ENCODE measurements at regions of chr11 and their contacts with region 1.

Region 1: DNA sequence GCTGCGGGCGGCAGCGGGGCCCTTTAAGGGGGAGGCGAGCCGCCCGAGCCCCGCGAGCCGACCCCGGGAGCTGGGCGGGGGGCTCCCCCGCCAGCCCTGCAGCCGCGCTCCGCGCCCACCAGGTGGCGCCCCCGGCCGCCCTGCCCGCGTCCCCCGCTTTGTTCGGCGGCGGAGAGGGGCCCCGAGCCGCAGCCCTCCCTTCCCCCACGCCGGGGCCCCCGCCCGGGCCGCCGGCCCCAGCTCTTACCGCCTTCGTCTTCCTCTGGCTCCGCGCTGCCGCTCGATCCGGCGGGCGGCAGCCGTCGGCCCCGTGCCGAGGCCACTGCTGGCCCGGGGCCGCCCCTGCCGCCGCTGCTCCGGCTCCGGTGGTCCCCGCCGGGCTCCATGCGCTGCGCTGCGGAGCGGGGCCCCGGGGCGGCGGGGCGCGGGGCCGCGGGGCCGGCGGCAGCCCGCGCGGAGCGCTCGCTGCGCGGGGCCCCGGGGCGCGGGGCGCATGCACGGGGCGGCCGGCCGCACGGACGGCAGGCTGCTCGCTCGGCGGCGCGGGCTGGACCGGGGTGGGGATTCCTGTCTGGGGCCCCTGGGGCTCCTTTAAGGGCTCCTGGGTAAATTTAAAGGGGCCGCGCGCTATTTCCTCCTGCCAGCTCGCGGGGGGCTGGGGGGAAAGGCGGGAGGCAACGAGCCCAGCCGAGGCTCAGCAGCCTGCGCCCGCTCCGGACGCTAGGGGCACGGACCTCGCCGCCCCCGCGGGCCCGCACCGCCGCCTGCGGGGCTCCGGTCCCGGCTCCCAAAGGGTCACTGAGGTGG is at the start of gene ZFTA:
- DNase-seq: peak; percentile 33 to 81 (median 64)
- ATAC-seq: peak; percentile 76
- H3K4me3 ChIP-seq: peak within 1 kb of the TSS; percentile 69 to 85
- H3K4me3 Mint-ChIP-seq: peak within 1 kb of the TSS; percentile 94
- H3K27ac ChIP-seq: peak within 1 kb of the TSS in 1 of 2 experiments; percentile 13
- H3K27ac Mint-ChIP-seq: peak within 1 kb of the TSS; percentile 86
- H3K4me1 ChIP-seq: peaks cover 15% of the 10 kb centered on the region
- H3K4me1 Mint-ChIP-seq: peaks cover 16% of the 10 kb centered on the region
- H3K27me3 ChIP-seq: peaks cover 0 to 3% of the 10 kb centered on the region in 2 experiments
- H3K27me3 Mint-ChIP-seq: no peaks in the 10 kb centered on the region
- CTCF ChIP-seq: peak; percentile 52
- total RNA-seq, gene ZFTA: 3.2 to 5.7 TPM

Region 2: GRCh38 chr11:63671322-63672155 is 96.9 kb before region 1 on chr11 and contains the start of gene ATL3:
- CTCF ChIA-PET with region 1: interaction called, 4 read pairs
- POLR2A ChIA-PET with region 1: no interaction called
- intact Hi-C with region 1: loop called in 1 of 2 experiments (anchors 2 kb)
- DNase-seq: peak; percentile 87 to 98 (median 96)
- ATAC-seq: peak; percentile 95
- H3K4me3 ChIP-seq: peak within 1 kb of the TSS; percentile 79 to 91
- H3K4me3 Mint-ChIP-seq: peak within 1 kb of the TSS; percentile 86
- H3K27ac ChIP-seq: peak within 1 kb of the TSS; percentile 65 to 74
- H3K27ac Mint-ChIP-seq: peak within 1 kb of the TSS; percentile 87
- H3K4me1 ChIP-seq: peaks cover 19% of the 10 kb centered on the region
- H3K4me1 Mint-ChIP-seq: peaks cover 29% of the 10 kb centered on the region
- H3K27me3 ChIP-seq: no peaks in the 10 kb centered on the region
- H3K27me3 Mint-ChIP-seq: no peaks in the 10 kb centered on the region
- CTCF ChIP-seq: no peak
- total RNA-seq, gene ATL3: 11.6 to 11.8 TPM

Region 3: DNA sequence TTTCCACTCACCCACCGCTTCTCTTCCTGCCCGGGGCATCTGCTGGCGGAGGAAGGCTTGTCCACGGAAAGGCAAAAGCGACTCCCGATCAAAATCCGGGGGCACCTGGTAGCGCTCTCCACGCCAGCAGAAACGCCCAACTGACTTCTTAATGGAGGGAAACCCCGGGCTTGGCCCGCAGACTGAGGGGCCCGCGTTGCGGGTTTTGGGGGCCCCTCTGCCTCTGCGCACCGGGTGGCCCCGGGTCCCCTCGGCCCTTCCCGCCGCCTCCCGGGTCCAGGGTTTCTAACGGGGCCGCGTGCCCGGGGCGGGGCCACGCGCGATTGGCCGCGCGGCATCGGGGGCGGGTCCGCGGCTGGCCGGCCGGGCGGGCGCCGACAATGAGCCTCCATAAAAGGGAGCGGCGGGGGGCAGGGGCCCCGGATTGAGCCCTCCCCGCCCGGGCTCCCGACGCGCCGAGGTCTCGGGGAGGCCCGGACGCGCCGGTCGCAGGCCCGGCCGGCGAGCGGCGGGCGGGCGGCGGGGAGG is 44.7 kb after region 1 on chr11 and contains the start of gene SPINDOC:
- CTCF ChIA-PET with region 1: no interaction called
- POLR2A ChIA-PET with region 1: no interaction called
- intact Hi-C with region 1: loop called (anchors 1 to 5 kb)
- DNase-seq: peak; percentile 29 to 83 (median 70)
- ATAC-seq: peak; percentile 88
- H3K4me3 ChIP-seq: peak within 1 kb of the TSS; percentile 80 to 92
- H3K4me3 Mint-ChIP-seq: peak within 1 kb of the TSS; percentile 79
- H3K27ac ChIP-seq: peak within 1 kb of the TSS; percentile 35 to 44
- H3K27ac Mint-ChIP-seq: peak within 1 kb of the TSS; percentile 22
- H3K4me1 ChIP-seq: peaks cover 12% of the 10 kb centered on the region
- H3K4me1 Mint-ChIP-seq: peaks cover 24% of the 10 kb centered on the region
- H3K27me3 ChIP-seq: no peaks in the 10 kb centered on the region
- H3K27me3 Mint-ChIP-seq: no peaks in the 10 kb centered on the region
- CTCF ChIP-seq: no peak
- total RNA-seq, gene SPINDOC: 4.0 to 4.1 TPM

Region 4: GRCh38 chr11:63938479-63939396 is 170.3 kb after region 1 on chr11 and contains the start of gene NAA40:
- CTCF ChIA-PET with region 1: interaction called, 27 read pairs
- POLR2A ChIA-PET with region 1: no interaction called
- intact Hi-C with region 1: loop called in 1 of 2 experiments (anchors 2 kb)
- DNase-seq: peak; percentile 77 to 98 (median 90)
- ATAC-seq: peak; percentile 84
- H3K4me3 ChIP-seq: peak within 1 kb of the TSS; percentile 66 to 73
- H3K4me3 Mint-ChIP-seq: peak within 1 kb of the TSS; percentile 90
- H3K27ac ChIP-seq: peak within 1 kb of the TSS; percentile 49 to 78
- H3K27ac Mint-ChIP-seq: peak within 1 kb of the TSS; percentile 79
- H3K4me1 ChIP-seq: peaks cover 15% of the 10 kb centered on the region
- H3K4me1 Mint-ChIP-seq: peaks cover 29% of the 10 kb centered on the region
- H3K27me3 ChIP-seq: no peaks in the 10 kb centered on the region
- H3K27me3 Mint-ChIP-seq: no peaks in the 10 kb centered on the region
- CTCF ChIP-seq: no peak
- total RNA-seq, gene NAA40: 12.0 to 14.6 TPM

Region 5: DNA sequence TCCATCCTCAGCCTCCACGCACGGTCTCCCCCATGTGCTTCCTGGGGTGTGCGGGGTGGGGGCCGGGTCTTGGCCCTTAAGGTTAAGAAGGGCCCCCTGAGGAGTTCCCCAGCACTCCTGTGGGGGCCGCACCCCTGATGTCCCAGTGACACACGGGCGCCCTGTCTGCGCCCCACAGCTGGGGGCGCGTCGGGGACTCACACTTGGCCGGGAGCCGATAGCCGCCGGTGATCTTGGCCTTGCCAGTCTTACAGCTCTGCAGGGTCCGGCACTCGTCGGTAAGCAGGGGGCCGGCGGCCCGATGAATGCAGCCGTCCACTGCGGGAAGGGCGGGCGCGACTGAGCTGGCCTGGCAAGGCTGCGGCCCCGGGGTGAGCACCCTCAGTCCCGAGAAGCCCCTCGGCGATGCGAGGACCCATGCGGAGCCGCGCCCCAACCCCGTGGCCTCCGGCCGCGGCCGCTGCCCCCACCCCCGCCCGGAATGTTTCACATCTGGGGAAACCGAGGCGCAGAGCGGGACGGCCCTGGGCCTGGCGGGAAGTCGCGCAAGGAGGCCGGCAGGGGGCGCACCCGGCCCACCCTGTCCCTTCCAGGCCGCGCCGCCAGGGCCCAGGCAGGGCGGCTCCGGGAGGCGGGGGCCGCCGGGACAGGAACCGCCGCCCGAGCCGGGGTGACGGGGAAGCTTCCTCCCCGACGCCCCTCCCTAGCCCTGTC is 231.7 kb after region 1 on chr11:
- CTCF ChIA-PET with region 1: interaction called, 4 read pairs
- POLR2A ChIA-PET with region 1: no interaction called
- intact Hi-C with region 1: loop called (anchors 2 to 5 kb)
- DNase-seq: peak; percentile 45 to 88 (median 70)
- ATAC-seq: peak; percentile 79
- H3K4me3 ChIP-seq: peak overlapping the region; percentile 24 to 33
- H3K4me3 Mint-ChIP-seq: peak overlapping the region; percentile 56
- H3K27ac ChIP-seq: no peak overlapping the region
- H3K27ac Mint-ChIP-seq: no peak overlapping the region
- H3K4me1 ChIP-seq: peaks cover 17% of the 10 kb centered on the region
- H3K4me1 Mint-ChIP-seq: peaks cover 9% of the 10 kb centered on the region
- H3K27me3 ChIP-seq: no peaks in the 10 kb centered on the region
- H3K27me3 Mint-ChIP-seq: peaks cover 2% of the 10 kb centered on the region
- CTCF ChIP-seq: peak; percentile 82

Measured in CD8-positive, alpha-beta T cell (primary cell).